Psoas muscle (tissue), 8 donors: ENCODE measurements at regions of chr2 and their contacts with region 1.

Region 1: GRCh38 chr2:178136321-178137025 is 24.2 kb downstream of the RBM45 start:
- DNase-seq: no peak
- ATAC-seq: no peak
- H3K4me3 ChIP-seq: no peak overlapping the region
- H3K27ac ChIP-seq: no peak overlapping the region
- H3K4me1 ChIP-seq: no peaks in the 10 kb centered on the region
- H3K27me3 ChIP-seq: no peaks in the 10 kb centered on the region
- CTCF ChIP-seq: no peak

Region 2: DNA sequence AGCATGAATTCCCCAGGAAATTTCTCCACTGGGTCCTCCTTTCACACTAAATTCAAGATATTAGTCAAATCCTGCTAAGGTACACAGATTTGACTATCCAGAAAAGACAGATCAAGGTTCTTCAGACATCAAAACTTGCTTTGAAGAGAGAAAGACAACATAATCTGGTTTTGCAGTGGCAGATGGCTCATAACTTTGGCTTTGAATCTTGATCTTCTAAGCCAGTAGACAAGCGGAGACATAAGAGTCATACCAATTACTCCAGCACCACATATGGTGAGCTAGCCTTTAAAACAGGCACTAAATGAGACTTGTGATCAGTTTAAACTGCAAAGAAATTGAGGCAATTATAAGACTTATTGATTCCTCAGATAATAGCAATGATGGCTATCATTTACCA is 93.2 kb before region 1 on chr2:
- intact Hi-C with region 1: no loop called
- DNase-seq: no peak
- ATAC-seq: no peak
- H3K4me3 ChIP-seq: no peak overlapping the region
- H3K27ac ChIP-seq: no peak overlapping the region
- H3K4me1 ChIP-seq: no peaks in the 10 kb centered on the region
- H3K27me3 ChIP-seq: no peaks in the 10 kb centered on the region
- CTCF ChIP-seq: no peak

Region 3: GRCh38 chr2:178306352-178307073 is 170.0 kb after region 1 on chr2:
- intact Hi-C with region 1: loop called in 1 of 2 experiments (anchors 10 kb)
- DNase-seq: no peak
- ATAC-seq: peak; percentile 38 to 80 (median 76)
- H3K4me3 ChIP-seq: no peak overlapping the region
- H3K27ac ChIP-seq: peak overlapping the region; percentile 11
- H3K4me1 ChIP-seq: peaks cover 4% of the 10 kb centered on the region
- H3K27me3 ChIP-seq: no peaks in the 10 kb centered on the region
- CTCF ChIP-seq: peak; percentile 45

Region 4: GRCh38 chr2:178322068-178322467 is 185.6 kb after region 1 on chr2:
- intact Hi-C with region 1: loop called in 1 of 2 experiments (anchors 1 kb)
- DNase-seq: no peak
- ATAC-seq: no peak
- H3K4me3 ChIP-seq: no peak overlapping the region
- H3K27ac ChIP-seq: no peak overlapping the region
- H3K4me1 ChIP-seq: peaks cover 26% of the 10 kb centered on the region
- H3K27me3 ChIP-seq: no peaks in the 10 kb centered on the region
- CTCF ChIP-seq: no peak